HepG2 (cell line): ENCODE measurements at regions of chr11 and their contacts with region 1.

Region 1: DNA sequence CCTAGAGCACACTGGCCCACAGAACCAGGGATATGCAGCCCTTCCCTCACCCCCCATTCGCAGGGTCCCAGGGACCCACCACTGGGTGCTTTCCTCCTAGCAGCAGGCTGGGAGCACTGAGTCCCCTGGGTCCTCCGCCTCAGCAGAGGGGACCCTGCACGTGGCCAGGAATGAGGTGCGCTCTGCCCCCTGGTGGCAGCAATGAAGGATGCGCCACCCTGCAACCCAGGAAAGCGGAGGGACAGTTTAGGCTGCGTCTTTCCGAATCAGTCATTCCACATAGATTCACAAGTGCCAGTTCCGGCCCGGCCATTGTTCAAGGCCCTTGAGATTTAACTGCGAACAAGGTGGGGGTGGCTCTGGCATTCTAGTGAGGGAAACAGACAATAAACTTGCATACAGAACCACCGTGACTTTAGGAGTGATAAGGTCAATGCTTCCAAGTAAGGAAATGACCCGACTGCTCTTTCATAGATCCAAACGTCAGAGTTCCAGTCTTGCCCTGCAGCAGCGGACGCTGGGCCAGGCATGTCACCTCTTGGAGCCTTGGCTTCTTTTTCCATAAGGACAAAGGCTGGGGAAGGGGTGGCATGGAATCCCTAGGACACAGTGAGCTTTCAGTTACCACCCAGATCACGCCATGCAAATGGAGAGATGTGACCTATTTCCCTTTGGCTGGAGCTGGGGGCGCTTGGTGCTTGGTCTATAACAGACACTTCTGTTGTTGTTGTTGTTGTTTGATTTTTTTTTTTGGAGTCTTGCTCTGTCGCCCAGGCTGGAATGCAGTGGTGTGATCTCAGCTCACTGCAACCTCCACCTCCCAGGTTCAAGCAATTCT is 7.7 kb downstream of the RIN1 start:
- DNase-seq: peak; percentile 71
- ATAC-seq: peak; percentile 85
- H3K4me3 ChIP-seq: peak overlapping the region; percentile 36 to 76 (median 47)
- H3K27ac ChIP-seq: peak overlapping the region; percentile 45
- H3K4me1 ChIP-seq: peaks cover 57% of the 10 kb centered on the region
- H3K27me3 ChIP-seq: peaks cover 0 to 17% of the 10 kb centered on the region in 2 experiments; a peak in 3 of 5 replicates
- CTCF ChIP-seq: peak; percentile 97
- EP300 ChIP-seq: no peak
- POLR2A ChIP-seq: no peak
- RAD21 ChIP-seq: peak; percentile 87

Region 2: DNA sequence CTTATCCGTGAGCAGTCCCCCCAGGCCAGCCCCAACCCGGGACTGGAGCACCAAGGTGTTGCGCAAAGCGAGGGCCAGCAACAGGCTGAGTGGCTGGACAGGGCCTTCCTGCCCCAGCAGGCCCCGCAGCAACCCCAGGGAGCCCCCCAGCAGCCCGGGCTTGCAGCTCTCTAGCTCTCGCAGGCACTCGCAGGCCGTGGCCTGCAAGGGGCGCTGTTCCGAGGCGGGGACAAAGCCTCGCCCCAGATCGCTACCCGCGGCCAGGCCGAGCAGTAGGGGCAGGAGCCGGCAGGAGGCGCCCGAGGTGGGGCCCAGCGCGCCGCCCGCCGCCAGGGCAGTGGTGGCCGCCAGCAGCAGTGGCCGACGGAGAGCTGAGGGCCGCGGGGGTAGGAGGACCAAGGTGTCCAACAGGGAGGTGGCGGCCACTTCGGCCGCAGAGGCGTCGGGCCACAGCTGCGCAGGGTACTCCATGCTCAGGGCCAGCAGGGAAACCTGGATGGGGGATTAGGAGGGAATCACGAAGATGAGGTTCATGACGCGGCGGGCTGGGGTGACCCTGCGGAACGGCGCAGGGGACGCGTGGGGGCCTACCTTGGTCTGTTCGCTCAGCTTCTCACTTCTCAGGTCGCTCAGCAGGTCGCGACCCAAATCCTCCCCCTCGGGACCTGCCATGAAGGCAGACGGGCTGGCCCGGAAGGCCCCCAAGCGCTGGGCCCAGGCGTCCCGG is 548.5 kb before region 1 on chr11:
- CTCF ChIA-PET with region 1: no interaction called
- POLR2A ChIA-PET with region 1: no interaction called
- in situ Hi-C with region 1: no loop called
- intact Hi-C with region 1: loop called (anchors 5 kb)
- DNase-seq: peak; percentile 53
- ATAC-seq: peak; percentile 74
- H3K4me3 ChIP-seq: peak overlapping the region; percentile 59 to 92 (median 62)
- H3K27ac ChIP-seq: peak overlapping the region; percentile 61
- H3K4me1 ChIP-seq: peaks cover 43% of the 10 kb centered on the region
- H3K27me3 ChIP-seq: peaks cover 1 to 28% of the 10 kb centered on the region in 2 experiments; a peak in 4 of 5 replicates
- CTCF ChIP-seq: peak; percentile 80
- EP300 ChIP-seq: no peak
- POLR2A ChIP-seq: peak in 1 of 2 experiments; percentile 19; a peak in 1 of 4 replicates
- RAD21 ChIP-seq: peak; percentile 80

Region 3: DNA sequence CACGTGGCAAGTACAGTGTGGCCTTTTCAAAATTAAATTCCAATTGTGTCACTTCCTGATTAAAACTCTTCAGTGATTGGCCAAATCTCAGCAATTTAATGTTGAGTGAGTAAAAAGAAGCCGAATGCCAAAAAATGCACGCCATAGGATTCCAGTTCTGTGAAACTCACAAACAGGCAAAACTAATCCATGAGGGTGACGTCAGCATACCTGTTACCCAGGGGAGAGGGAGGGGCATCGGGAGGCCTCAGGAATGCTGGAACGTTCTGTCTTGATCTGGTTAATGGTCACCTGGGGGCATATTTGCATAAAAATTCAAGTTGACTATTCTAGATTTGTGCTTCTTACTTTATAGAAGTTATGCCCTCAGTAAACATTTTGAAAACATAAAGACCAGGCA is 100.0 kb before region 1 on chr11:
- CTCF ChIA-PET with region 1: no interaction called
- POLR2A ChIA-PET with region 1: no interaction called
- in situ Hi-C with region 1: no loop called
- intact Hi-C with region 1: no loop called
- DNase-seq: no peak
- ATAC-seq: no peak
- H3K4me3 ChIP-seq: no peak overlapping the region
- H3K27ac ChIP-seq: no peak overlapping the region
- H3K4me1 ChIP-seq: no peaks in the 10 kb centered on the region
- H3K27me3 ChIP-seq: no peaks in the 10 kb centered on the region
- CTCF ChIP-seq: no peak
- EP300 ChIP-seq: no peak
- POLR2A ChIP-seq: no peak
- RAD21 ChIP-seq: no peak

Region 4: DNA sequence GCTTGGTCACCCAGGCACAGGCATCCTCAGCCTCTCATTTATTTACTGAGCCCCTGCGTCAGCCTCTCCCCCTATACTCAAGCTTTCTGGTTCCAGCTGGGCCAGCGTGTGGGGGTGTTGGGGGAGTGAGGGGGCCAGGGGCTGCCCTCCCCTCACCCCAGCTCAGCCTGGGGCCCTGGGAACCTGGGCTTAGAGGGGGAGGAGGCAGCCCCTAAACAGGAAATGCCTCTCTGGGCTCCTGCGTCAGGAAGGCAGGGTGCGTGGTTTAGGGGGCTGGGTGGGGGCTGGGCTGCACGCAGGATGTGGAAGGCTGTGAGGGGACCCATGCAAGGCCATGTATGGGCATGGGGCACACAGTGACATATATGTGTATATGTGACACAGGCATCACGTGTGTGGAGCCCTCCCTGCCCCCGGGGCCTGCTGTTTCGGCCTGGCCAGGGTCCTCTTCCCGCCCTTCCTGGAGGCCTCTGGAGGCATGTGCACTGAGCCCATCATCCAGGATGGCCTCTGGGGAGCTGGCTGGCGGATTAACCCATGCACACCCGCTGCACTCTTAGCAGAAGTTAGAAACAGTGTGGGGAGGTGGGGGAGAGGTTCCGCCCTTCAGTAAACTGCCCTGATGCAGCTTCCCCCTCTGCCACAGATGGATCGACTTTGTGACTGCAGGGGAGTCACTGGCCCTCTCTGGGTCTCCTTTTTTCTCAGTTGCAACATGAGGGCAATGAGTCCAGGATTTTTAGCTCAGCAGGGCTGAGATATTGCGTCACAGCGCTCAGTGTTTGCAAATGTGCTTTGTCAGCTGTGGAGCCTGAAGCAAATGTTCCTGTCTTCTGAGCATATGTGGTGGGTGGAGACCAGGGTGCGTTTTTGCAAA is 10.6 kb before region 1 on chr11:
- CTCF ChIA-PET with region 1: interaction called, 68 read pairs
- POLR2A ChIA-PET with region 1: interaction called, 59 read pairs
- in situ Hi-C with region 1: no loop called
- intact Hi-C with region 1: no loop called
- DNase-seq: peak; percentile 70
- ATAC-seq: peak; percentile 10
- H3K4me3 ChIP-seq: peak overlapping the region; percentile 11 to 66 (median 24)
- H3K27ac ChIP-seq: peak overlapping the region; percentile 32
- H3K4me1 ChIP-seq: peaks cover 50% of the 10 kb centered on the region
- H3K27me3 ChIP-seq: 0 out of 5 replicates have a peak, but pooled peaks cover 0 to 6% of the 10 kb centered on the region in 2 experiments
- CTCF ChIP-seq: no peak
- EP300 ChIP-seq: peak in 1 of 2 experiments; percentile 18; a peak in 1 of 4 replicates
- POLR2A ChIP-seq: no peak
- RAD21 ChIP-seq: peak; percentile 6; the same call in 1 of the 2 replicates